Posterior cingulate gyrus (tissue), 11 donors: ENCODE measurements at regions of chr13 and their contacts with region 1.

Region 1: DNA sequence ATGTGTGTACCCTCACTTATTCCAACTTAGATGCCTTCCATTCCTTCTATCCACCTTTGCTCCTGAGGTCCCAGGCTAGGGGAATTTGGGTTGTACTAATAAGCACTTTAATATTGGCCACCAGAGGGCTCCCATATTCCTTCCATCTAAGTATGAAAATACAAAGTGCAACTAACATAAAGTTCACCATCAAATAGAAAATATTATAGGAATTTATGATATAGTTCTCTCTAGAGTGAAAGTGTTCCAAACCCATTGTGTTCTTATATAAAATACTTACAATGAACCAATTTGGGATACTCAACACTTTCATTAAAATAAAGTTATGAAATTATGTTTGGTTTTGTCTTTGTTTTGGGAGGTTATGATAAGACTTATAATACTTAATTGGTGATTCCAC is 62.3 kb downstream of the ITGBL1 start:
- DNase-seq: peak in 1 of 10 donors; percentile 20

Region 2: GRCh38 chr13:101757446-101758039 is 242.8 kb after region 1 on chr13:
- intact Hi-C with region 1: loop called (anchors 1 kb)
- DNase-seq: no peak

Region 3: GRCh38 chr13:101916108-101916757 is 401.4 kb after region 1 on chr13:
- intact Hi-C with region 1: loop called (anchors 10 kb)
- DNase-seq: peak; percentile 21 to 93 (median 60)